T-cell (primary cell): ENCODE measurements at regions of chr2 and their contacts with region 1.

Region 1: GRCh38 chr2:54899576-54900200 is 150.6 kb downstream of the RTN4 start:
- DNase-seq: peak in 2 of 35 experiments; percentile 2 to 43
- ATAC-seq: peak in 1 of 4 experiments; percentile 37
- H3K4me3 ChIP-seq: no peak overlapping the region
- H3K4me3 Mint-ChIP-seq: no peak overlapping the region
- H3K27ac ChIP-seq: no peak overlapping the region
- H3K27ac Mint-ChIP-seq: no peak overlapping the region
- H3K4me1 ChIP-seq: peaks cover 15 to 18% of the 10 kb centered on the region in 2 experiments
- H3K4me1 Mint-ChIP-seq: peaks cover 24 to 32% (median 29%) of the 10 kb centered on the region in 3 donors
- H3K27me3 ChIP-seq: no peaks in the 10 kb centered on the region
- H3K27me3 Mint-ChIP-seq: no peaks in the 10 kb centered on the region

Region 2: DNA sequence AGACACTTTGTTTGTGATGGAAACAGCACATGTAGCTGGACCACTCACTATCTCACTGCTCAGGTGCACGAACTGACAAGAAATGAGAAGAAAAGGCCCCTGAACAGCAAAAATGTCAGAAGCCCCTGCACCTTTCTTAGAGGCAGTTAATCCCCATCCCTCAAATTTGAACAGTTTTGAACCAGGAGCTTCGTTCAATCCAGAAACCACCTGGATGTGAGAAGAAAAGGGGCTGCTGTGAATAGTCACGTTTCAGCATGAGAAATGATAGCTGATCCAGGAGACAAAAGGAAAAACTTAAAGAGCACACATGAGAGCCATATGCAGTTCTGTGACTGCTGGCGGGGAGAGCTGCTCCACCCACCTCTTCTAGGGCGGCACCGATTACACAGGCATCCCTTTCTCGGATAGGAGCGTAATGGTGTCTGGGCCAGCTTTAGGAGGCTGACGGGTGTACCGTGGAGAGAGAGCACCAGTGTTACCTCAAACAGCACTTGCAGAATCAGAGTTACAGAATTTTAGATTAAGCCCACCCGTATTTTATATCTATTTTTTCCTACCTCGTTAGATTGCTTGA is 293.2 kb before region 1 on chr2:
- CTCF ChIA-PET with region 1: no interaction called
- POLR2A ChIA-PET with region 1: no interaction called
- DNase-seq: peak in 25 of 35 experiments; percentile 18 to 57 (median 38)
- ATAC-seq: peak; percentile 68 to 88 (median 80)
- H3K4me3 ChIP-seq: no peak overlapping the region
- H3K4me3 Mint-ChIP-seq: peak overlapping the region; percentile 53 to 65 (median 58)
- H3K27ac ChIP-seq: no peak overlapping the region
- H3K27ac Mint-ChIP-seq: peak overlapping the region; percentile 81 to 100
- H3K4me1 ChIP-seq: peaks cover 55 to 58% of the 10 kb centered on the region in 2 experiments
- H3K4me1 Mint-ChIP-seq: peaks cover 85 to 89% (median 87%) of the 10 kb centered on the region in 3 donors
- H3K27me3 ChIP-seq: no peaks in the 10 kb centered on the region
- H3K27me3 Mint-ChIP-seq: no peaks in the 10 kb centered on the region

Region 3: GRCh38 chr2:54957321-54957999 is 57.8 kb after region 1 on chr2:
- CTCF ChIA-PET with region 1: interaction called in 1 of 2 experiments, 10 read pairs
- POLR2A ChIA-PET with region 1: no interaction called
- DNase-seq: no peak
- ATAC-seq: no peak
- H3K4me3 ChIP-seq: no peak overlapping the region
- H3K4me3 Mint-ChIP-seq: no peak overlapping the region
- H3K27ac ChIP-seq: no peak overlapping the region
- H3K27ac Mint-ChIP-seq: no peak overlapping the region
- H3K4me1 ChIP-seq: no peaks in the 10 kb centered on the region
- H3K4me1 Mint-ChIP-seq: no peaks in the 10 kb centered on the region
- H3K27me3 ChIP-seq: no peaks in the 10 kb centered on the region
- H3K27me3 Mint-ChIP-seq: no peaks in the 10 kb centered on the region

Region 4: GRCh38 chr2:55014962-55015939 is 115.6 kb after region 1 on chr2:
- CTCF ChIA-PET with region 1: interaction called in 1 of 2 experiments, 10 read pairs
- POLR2A ChIA-PET with region 1: no interaction called
- DNase-seq: peak in 28 of 35 experiments; percentile 3 to 72 (median 30)
- ATAC-seq: peak in 1 of 4 experiments; percentile 22
- H3K4me3 ChIP-seq: no peak overlapping the region
- H3K4me3 Mint-ChIP-seq: no peak overlapping the region
- H3K27ac ChIP-seq: no peak overlapping the region
- H3K27ac Mint-ChIP-seq: no peak overlapping the region
- H3K4me1 ChIP-seq: peaks cover 4 to 16% of the 10 kb centered on the region in 2 experiments
- H3K4me1 Mint-ChIP-seq: peaks cover 64 to 73% (median 66%) of the 10 kb centered on the region in 3 donors
- H3K27me3 ChIP-seq: no peaks in the 10 kb centered on the region
- H3K27me3 Mint-ChIP-seq: no peaks in the 10 kb centered on the region

Region 5: GRCh38 chr2:55168221-55169154 is 268.8 kb after region 1 on chr2:
- CTCF ChIA-PET with region 1: interaction called, 5 to 32 read pairs
- POLR2A ChIA-PET with region 1: no interaction called
- DNase-seq: peak in 29 of 35 experiments; percentile 4 to 70 (median 20)
- ATAC-seq: peak; percentile 59 to 73 (median 66)
- H3K4me3 ChIP-seq: no peak overlapping the region
- H3K4me3 Mint-ChIP-seq: no peak overlapping the region
- H3K27ac ChIP-seq: no peak overlapping the region
- H3K27ac Mint-ChIP-seq: no peak overlapping the region
- H3K4me1 ChIP-seq: no peaks in the 10 kb centered on the region
- H3K4me1 Mint-ChIP-seq: peaks cover 0 to 4% (median 0%) of the 10 kb centered on the region in 3 donors
- H3K27me3 ChIP-seq: no peaks in the 10 kb centered on the region
- H3K27me3 Mint-ChIP-seq: no peaks in the 10 kb centered on the region

Region 6: GRCh38 chr2:55175254-55176025 is 275.8 kb after region 1 on chr2:
- CTCF ChIA-PET with region 1: interaction called, 5 to 31 read pairs
- POLR2A ChIA-PET with region 1: no interaction called
- DNase-seq: peak in 1 of 35 experiments; percentile 67
- ATAC-seq: peak; percentile 70 to 86 (median 78)
- H3K4me3 ChIP-seq: no peak overlapping the region
- H3K4me3 Mint-ChIP-seq: no peak overlapping the region
- H3K27ac ChIP-seq: no peak overlapping the region
- H3K27ac Mint-ChIP-seq: no peak overlapping the region
- H3K4me1 ChIP-seq: no peaks in the 10 kb centered on the region
- H3K4me1 Mint-ChIP-seq: peaks cover 6 to 8% (median 6%) of the 10 kb centered on the region in 3 donors
- H3K27me3 ChIP-seq: no peaks in the 10 kb centered on the region
- H3K27me3 Mint-ChIP-seq: no peaks in the 10 kb centered on the region